ENCODE measurements at regions of chr16 and their contacts with region 1.

Region 1: GRCh38 chr16:64089697-64090096 is 1032.2 kb downstream of the CDH11 start:
- DNase-seq: peak; percentile 53
- ATAC-seq: peak; percentile 54
- H3K4me3 ChIP-seq: no peak overlapping the region
- H3K27ac ChIP-seq: no peak overlapping the region
- H3K4me1 ChIP-seq: peaks cover 14% of the 10 kb centered on the region
- H3K27me3 ChIP-seq: no peaks in the 10 kb centered on the region
- CTCF ChIP-seq: peak; percentile 81

Region 2: GRCh38 chr16:64074706-64075105 is 15.0 kb before region 1 on chr16:
- CTCF ChIA-PET with region 1: no interaction called
- POLR2A ChIA-PET with region 1: no interaction called
- intact Hi-C with region 1: no loop called
- DNase-seq: no peak
- ATAC-seq: no peak
- H3K4me3 ChIP-seq: no peak overlapping the region
- H3K27ac ChIP-seq: no peak overlapping the region
- H3K4me1 ChIP-seq: no peaks in the 10 kb centered on the region
- H3K27me3 ChIP-seq: no peaks in the 10 kb centered on the region
- CTCF ChIP-seq: no peak

Region 3: GRCh38 chr16:64238571-64238970 is 148.9 kb after region 1 on chr16:
- CTCF ChIA-PET with region 1: no interaction called
- POLR2A ChIA-PET with region 1: interaction called, 3 read pairs
- intact Hi-C with region 1: loop called (anchors 5 kb)
- DNase-seq: peak; percentile 74
- ATAC-seq: peak; percentile 80
- H3K4me3 ChIP-seq: no peak overlapping the region
- H3K27ac ChIP-seq: peak overlapping the region; percentile 58
- H3K4me1 ChIP-seq: peaks cover 12% of the 10 kb centered on the region
- H3K27me3 ChIP-seq: no peaks in the 10 kb centered on the region
- CTCF ChIP-seq: no peak

Region 4: GRCh38 chr16:64356267-64356666 is 266.6 kb after region 1 on chr16:
- CTCF ChIA-PET with region 1: no interaction called
- POLR2A ChIA-PET with region 1: no interaction called
- intact Hi-C with region 1: loop called (anchors 5 kb)
- DNase-seq: peak; percentile 75
- ATAC-seq: peak; percentile 80
- H3K4me3 ChIP-seq: no peak overlapping the region
- H3K27ac ChIP-seq: peak overlapping the region; percentile 50
- H3K4me1 ChIP-seq: peaks cover 11% of the 10 kb centered on the region
- H3K27me3 ChIP-seq: no peaks in the 10 kb centered on the region
- CTCF ChIP-seq: no peak

Region 5: DNA sequence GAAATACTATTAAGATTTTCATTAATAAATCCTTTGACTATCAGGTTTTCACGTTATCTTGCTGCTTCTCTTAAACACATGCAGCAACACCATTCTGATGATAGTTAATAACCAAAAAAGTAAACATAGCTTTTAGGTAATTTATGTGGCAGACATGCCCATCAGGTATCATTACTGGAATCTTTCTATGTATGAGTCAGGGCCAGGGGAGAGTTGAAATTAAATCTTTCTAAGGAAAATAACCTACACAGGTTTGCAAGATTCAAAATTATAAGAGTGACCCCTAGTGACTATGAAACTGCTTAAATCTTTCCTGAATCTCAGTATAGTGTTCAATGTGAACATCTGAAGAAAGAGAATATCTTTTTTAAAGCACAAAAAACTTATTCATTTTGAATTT is 365.6 kb after region 1 on chr16:
- CTCF ChIA-PET with region 1: no interaction called
- POLR2A ChIA-PET with region 1: no interaction called
- intact Hi-C with region 1: loop called (anchors 1 kb)
- DNase-seq: peak; percentile 76
- ATAC-seq: peak; percentile 91
- H3K4me3 ChIP-seq: no peak overlapping the region
- H3K27ac ChIP-seq: no peak overlapping the region
- H3K4me1 ChIP-seq: peaks cover 27% of the 10 kb centered on the region
- H3K27me3 ChIP-seq: no peaks in the 10 kb centered on the region
- CTCF ChIP-seq: peak; percentile 67

Region 6: DNA sequence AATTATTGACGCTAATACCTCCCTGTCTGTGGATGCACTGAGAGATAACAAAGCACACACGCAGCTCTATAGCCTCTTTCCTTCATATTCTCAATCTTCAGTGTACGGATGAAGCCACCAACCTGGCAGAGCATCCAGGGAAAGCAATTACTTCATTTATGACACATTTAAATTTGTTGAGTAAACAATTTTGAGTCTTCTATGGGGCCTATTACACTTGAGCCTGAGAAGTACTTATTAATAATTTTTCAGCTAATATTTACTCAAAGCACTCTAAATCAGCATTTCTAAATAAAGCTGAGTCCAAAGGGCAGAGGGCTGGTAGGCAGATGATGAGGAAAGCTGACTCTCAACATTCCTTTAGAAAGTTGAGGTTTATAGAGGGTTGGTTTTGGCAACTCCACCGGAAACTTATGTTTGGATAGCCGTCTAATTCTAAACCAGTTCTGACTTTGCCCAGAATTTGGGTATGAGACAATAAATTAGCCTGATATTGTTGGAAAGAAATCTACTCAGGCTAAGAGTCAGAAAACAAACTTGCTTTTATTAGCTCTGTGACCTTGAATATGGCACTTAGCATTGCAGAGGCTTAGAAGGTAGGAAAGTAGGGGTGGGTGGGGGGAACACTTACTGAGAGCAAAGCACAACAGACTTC is 388.7 kb after region 1 on chr16:
- CTCF ChIA-PET with region 1: no interaction called
- POLR2A ChIA-PET with region 1: no interaction called
- intact Hi-C with region 1: loop called (anchors 1 kb)
- DNase-seq: peak; percentile 89
- ATAC-seq: peak; percentile 93
- H3K4me3 ChIP-seq: no peak overlapping the region
- H3K27ac ChIP-seq: peak overlapping the region; percentile 69
- H3K4me1 ChIP-seq: peaks cover 20% of the 10 kb centered on the region
- H3K27me3 ChIP-seq: 0 out of 2 replicates have a peak, but pooled peaks cover 2% of the 10 kb centered on the region
- CTCF ChIP-seq: no peak

Measured in PC-3 (cell line).